ENCODE measurements at regions of chr2 and their contacts with region 1.

Region 1: DNA sequence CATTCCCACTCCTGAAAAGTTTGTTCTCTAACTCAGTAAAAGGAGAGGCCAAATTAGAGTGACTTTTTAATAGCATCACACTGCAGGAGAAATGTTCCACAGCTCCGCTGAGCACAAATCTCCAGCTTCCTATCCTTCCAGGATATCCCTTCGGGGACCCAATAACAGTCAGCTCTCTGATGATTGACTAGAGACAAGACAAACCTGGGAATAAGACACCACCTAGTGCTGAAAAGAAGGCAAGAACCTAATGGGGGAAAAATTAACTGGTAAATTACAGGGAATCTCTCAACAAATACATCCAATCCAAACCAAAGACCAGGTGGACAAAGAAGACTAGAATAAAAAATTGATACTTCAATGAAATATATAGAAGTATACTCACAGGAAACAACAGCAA is 977.1 kb upstream of the SOX11 start:
- DNase-seq: peak; percentile 52
- H3K4me3 ChIP-seq: no peak overlapping the region
- H3K27ac ChIP-seq: no peak overlapping the region
- H3K4me1 ChIP-seq: no peaks in the 10 kb centered on the region
- H3K27me3 ChIP-seq: no peaks in the 10 kb centered on the region
- CTCF ChIP-seq: peak; percentile 33 to 34
- POLR2A ChIP-seq: no peak

Region 2: GRCh38 chr2:3703753-3704355 is 1011.2 kb before region 1 on chr2:
- CTCF ChIA-PET with region 1: no interaction called
- POLR2A ChIA-PET with region 1: no interaction called
- dilution Hi-C with region 1: no loop called
- intact Hi-C with region 1: no loop called
- DNase-seq: no peak
- H3K4me3 ChIP-seq: no peak overlapping the region
- H3K27ac ChIP-seq: no peak overlapping the region
- H3K4me1 ChIP-seq: no peaks in the 10 kb centered on the region
- H3K27me3 ChIP-seq: peaks cover 4 to 5% of the 10 kb centered on the region in 2 experiments
- CTCF ChIP-seq: no peak
- POLR2A ChIP-seq: no peak

Region 3: GRCh38 chr2:3954261-3954660 is 760.8 kb before region 1 on chr2:
- CTCF ChIA-PET with region 1: interaction called, 188 read pairs
- POLR2A ChIA-PET with region 1: no interaction called
- dilution Hi-C with region 1: no loop called
- intact Hi-C with region 1: loop called (anchors 1 kb)
- DNase-seq: no peak
- H3K4me3 ChIP-seq: no peak overlapping the region
- H3K27ac ChIP-seq: no peak overlapping the region
- H3K4me1 ChIP-seq: no peaks in the 10 kb centered on the region
- H3K27me3 ChIP-seq: no peaks in the 10 kb centered on the region
- CTCF ChIP-seq: no peak
- POLR2A ChIP-seq: no peak

Region 4: GRCh38 chr2:4053769-4054493 is 661.1 kb before region 1 on chr2:
- CTCF ChIA-PET with region 1: interaction called, 21 read pairs
- POLR2A ChIA-PET with region 1: no interaction called
- dilution Hi-C with region 1: no loop called
- intact Hi-C with region 1: loop called (anchors 1 kb)
- DNase-seq: peak; percentile 13
- H3K4me3 ChIP-seq: no peak overlapping the region
- H3K27ac ChIP-seq: no peak overlapping the region
- H3K4me1 ChIP-seq: peaks cover 3% of the 10 kb centered on the region
- H3K27me3 ChIP-seq: no peaks in the 10 kb centered on the region
- CTCF ChIP-seq: no peak
- POLR2A ChIP-seq: no peak

Region 5: DNA sequence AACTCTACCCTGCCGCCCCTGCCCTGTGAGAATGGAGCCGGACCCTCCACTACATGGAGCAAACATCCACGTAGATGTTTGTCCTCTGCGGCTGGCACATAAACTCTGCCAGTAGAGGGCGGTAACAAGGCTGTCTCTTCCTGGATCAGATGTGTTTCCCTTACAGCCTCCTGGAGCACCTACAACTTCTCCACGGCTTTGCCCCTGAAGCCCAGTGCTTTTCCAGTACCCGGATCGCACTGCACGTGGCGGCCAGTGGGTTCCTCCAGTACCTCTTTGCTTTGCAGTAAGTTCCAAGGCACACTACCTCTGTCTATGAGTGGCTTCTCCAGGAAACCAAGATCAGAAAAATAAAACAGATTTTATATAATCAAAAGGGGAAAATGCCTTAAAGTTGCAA is 360.4 kb before region 1 on chr2:
- CTCF ChIA-PET with region 1: interaction called, 50 read pairs
- POLR2A ChIA-PET with region 1: no interaction called
- dilution Hi-C with region 1: no loop called
- intact Hi-C with region 1: loop called (anchors 1 kb)
- DNase-seq: peak; percentile 69
- H3K4me3 ChIP-seq: no peak overlapping the region
- H3K27ac ChIP-seq: peak overlapping the region; percentile 70
- H3K4me1 ChIP-seq: peaks cover 25% of the 10 kb centered on the region
- H3K27me3 ChIP-seq: no peaks in the 10 kb centered on the region
- CTCF ChIP-seq: peak; percentile 66 to 79
- POLR2A ChIP-seq: no peak

Region 6: DNA sequence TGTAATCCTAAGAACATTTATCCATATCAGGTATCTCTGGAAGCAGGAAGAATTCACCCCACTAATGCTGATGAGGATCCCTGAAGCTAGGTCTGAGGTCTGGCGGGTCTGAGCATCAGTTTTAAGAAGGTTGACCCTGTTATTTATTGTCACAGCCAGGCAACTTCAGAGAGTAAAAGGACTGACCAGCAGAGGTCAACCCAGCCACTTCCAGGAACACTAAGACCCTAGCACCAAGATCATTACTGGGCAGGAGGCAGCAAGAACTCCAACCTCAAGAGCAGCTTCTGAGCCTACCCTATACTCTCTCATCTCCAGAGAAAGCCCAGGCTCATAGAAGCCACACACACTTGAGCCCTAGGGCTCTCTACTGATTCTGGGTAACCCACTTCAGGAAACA is 110.3 kb before region 1 on chr2:
- CTCF ChIA-PET with region 1: interaction called, 4 read pairs
- POLR2A ChIA-PET with region 1: no interaction called
- dilution Hi-C with region 1: no loop called
- intact Hi-C with region 1: loop called (anchors 10 kb)
- DNase-seq: no peak
- H3K4me3 ChIP-seq: no peak overlapping the region
- H3K27ac ChIP-seq: no peak overlapping the region
- H3K4me1 ChIP-seq: no peaks in the 10 kb centered on the region
- H3K27me3 ChIP-seq: no peaks in the 10 kb centered on the region
- CTCF ChIP-seq: no peak
- POLR2A ChIP-seq: no peak

Region 7: DNA sequence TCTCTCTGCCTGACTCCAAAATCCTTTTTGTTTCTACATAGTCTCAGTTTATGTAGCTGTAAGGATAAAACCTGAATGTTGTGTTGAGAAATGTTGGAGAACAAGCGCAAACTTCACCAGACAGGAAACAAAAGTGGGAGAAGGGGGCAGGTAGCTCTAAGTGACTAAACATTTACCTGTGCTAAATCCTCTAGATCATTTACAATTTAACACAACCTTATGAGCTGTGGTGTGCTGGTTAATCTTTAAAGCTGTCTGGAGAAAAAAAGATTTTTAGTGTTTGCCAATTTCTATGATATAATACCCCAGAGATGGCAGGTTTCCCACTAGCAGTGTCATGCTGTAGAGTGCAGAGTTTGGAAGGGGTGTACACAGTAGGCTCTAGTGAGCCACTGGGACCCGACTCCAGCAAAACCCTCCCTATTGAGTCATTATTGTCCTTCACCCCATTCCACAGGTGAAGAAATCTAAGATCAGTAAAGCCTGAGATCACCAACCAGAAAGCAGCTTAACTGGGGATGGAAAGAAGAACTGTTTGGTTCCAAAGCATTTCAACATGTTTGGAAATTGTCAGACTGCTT is 19.7 kb before region 1 on chr2:
- CTCF ChIA-PET with region 1: interaction called, 18 read pairs
- POLR2A ChIA-PET with region 1: no interaction called
- dilution Hi-C with region 1: no loop called
- intact Hi-C with region 1: no loop called
- DNase-seq: no peak
- H3K4me3 ChIP-seq: no peak overlapping the region
- H3K27ac ChIP-seq: no peak overlapping the region
- H3K4me1 ChIP-seq: no peaks in the 10 kb centered on the region
- H3K27me3 ChIP-seq: no peaks in the 10 kb centered on the region
- CTCF ChIP-seq: no peak
- POLR2A ChIP-seq: no peak

Measured in endothelial cell of umbilical vein (primary cell).